ENCODE measurements at regions of chr4 and their contacts with region 1.

Region 1: GRCh38 chr4:83012687-83013419 is 2.2 kb upstream of the LIN54 start:
- DNase-seq: peak; percentile 97 to 98
- H3K4me3 ChIP-seq: peak overlapping the region; percentile 51
- H3K4me3 Mint-ChIP-seq: peak overlapping the region; percentile 95
- H3K27ac Mint-ChIP-seq: peak overlapping the region; percentile 99
- H3K4me1 ChIP-seq: peaks cover 15% of the 10 kb centered on the region; the same call in 1 of the 2 replicates
- H3K4me1 Mint-ChIP-seq: peaks cover 21% of the 10 kb centered on the region
- H3K27me3 ChIP-seq: no peaks in the 10 kb centered on the region
- H3K27me3 Mint-ChIP-seq: no peaks in the 10 kb centered on the region
- CTCF ChIP-seq: peak; percentile 49 to 60

Region 2: GRCh38 chr4:82677321-82677720 is 335.5 kb before region 1 on chr4:
- CTCF ChIA-PET with region 1: no interaction called
- POLR2A ChIA-PET with region 1: no interaction called
- intact Hi-C with region 1: no loop called
- DNase-seq: peak in 1 of 2 experiments; percentile 50
- H3K4me3 ChIP-seq: no peak overlapping the region
- H3K4me3 Mint-ChIP-seq: no peak overlapping the region
- H3K27ac Mint-ChIP-seq: no peak overlapping the region
- H3K4me1 ChIP-seq: peaks cover 12% of the 10 kb centered on the region
- H3K4me1 Mint-ChIP-seq: peaks cover 13% of the 10 kb centered on the region
- H3K27me3 ChIP-seq: no peaks in the 10 kb centered on the region
- H3K27me3 Mint-ChIP-seq: no peaks in the 10 kb centered on the region
- CTCF ChIP-seq: no peak

Region 3: GRCh38 chr4:82785611-82786400 is 227.0 kb before region 1 on chr4:
- CTCF ChIA-PET with region 1: no interaction called
- POLR2A ChIA-PET with region 1: no interaction called
- intact Hi-C with region 1: no loop called
- DNase-seq: no peak
- H3K4me3 ChIP-seq: no peak overlapping the region
- H3K4me3 Mint-ChIP-seq: no peak overlapping the region
- H3K27ac Mint-ChIP-seq: no peak overlapping the region
- H3K4me1 ChIP-seq: peaks cover 19% of the 10 kb centered on the region
- H3K4me1 Mint-ChIP-seq: peaks cover 20% of the 10 kb centered on the region
- H3K27me3 ChIP-seq: no peaks in the 10 kb centered on the region
- H3K27me3 Mint-ChIP-seq: no peaks in the 10 kb centered on the region
- CTCF ChIP-seq: no peak

Region 4: GRCh38 chr4:82890901-82891706 is 121.7 kb before region 1 on chr4 and contains the start of gene SEC31A:
- CTCF ChIA-PET with region 1: no interaction called
- POLR2A ChIA-PET with region 1: interaction called, 11 read pairs
- intact Hi-C with region 1: no loop called
- DNase-seq: peak; percentile 96
- H3K4me3 ChIP-seq: peak within 1 kb of the TSS; percentile 73
- H3K4me3 Mint-ChIP-seq: peak within 1 kb of the TSS; percentile 94
- H3K27ac Mint-ChIP-seq: peak within 1 kb of the TSS; percentile 95
- H3K4me1 ChIP-seq: peaks cover 45% of the 10 kb centered on the region
- H3K4me1 Mint-ChIP-seq: peaks cover 28% of the 10 kb centered on the region
- H3K27me3 ChIP-seq: no peaks in the 10 kb centered on the region
- H3K27me3 Mint-ChIP-seq: no peaks in the 10 kb centered on the region
- CTCF ChIP-seq: no peak
- total RNA-seq, gene SEC31A: 175 and 187 TPM in 2 replicates

Region 5: GRCh38 chr4:82900331-82901128 is 112.3 kb before region 1 on chr4 and contains the start of gene THAP9:
- CTCF ChIA-PET with region 1: no interaction called
- POLR2A ChIA-PET with region 1: interaction called, 18 read pairs
- intact Hi-C with region 1: loop called (anchors 2 kb)
- DNase-seq: peak; percentile 97 to 99
- H3K4me3 ChIP-seq: peak within 1 kb of the TSS; percentile 69
- H3K4me3 Mint-ChIP-seq: no peak within 1 kb of the TSS
- H3K27ac Mint-ChIP-seq: no peak within 1 kb of the TSS
- H3K4me1 ChIP-seq: peaks cover 12% of the 10 kb centered on the region; the same call in 1 of the 2 replicates
- H3K4me1 Mint-ChIP-seq: no peaks in the 10 kb centered on the region
- H3K27me3 ChIP-seq: no peaks in the 10 kb centered on the region
- H3K27me3 Mint-ChIP-seq: no peaks in the 10 kb centered on the region
- CTCF ChIP-seq: no peak
- total RNA-seq, gene THAP9: 6.8 and 7.9 TPM in 2 replicates

Region 6: DNA sequence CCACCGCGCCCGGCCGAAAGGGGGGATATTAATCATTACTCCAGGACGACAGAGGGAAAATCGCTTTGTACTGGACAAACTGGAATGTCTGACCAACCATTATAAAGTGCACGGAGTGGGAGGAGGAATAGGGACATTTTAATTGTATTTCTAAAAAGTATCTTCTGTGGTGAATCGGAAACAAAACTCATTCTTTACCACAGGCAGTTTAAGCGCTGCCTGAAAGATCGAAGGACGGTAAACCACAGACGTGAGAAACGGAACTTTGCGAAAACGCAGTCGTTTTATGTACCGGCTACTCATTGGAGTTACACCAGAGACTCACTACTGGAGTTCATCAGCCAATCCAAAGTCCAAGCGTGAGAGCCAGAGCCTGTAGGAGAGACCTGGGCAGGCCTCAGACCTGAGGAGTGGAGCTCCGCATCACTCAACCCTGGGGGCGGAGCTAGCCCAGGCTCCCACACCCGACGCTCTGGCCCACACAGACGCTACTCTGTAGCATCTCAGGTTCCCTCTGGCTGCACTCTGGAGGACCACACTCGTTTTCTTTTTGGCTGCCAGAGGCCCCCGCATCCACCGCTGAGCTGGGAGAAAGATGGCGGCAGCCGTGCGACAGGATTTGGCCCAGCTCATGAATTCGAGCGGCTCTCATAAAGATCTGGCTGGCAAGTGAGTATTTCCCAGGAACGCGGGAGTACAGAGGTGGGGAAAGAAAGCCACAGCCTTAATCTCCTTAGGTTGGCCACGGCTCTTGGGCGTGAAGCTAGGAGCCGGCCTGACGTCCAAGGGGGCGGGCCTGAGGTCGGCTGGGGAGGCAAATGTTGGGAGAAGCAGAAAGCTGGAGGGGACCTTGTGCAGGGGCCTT is 22.0 kb after region 1 on chr4 and contains the start of gene COPS4:
- CTCF ChIA-PET with region 1: interaction called, 22 read pairs
- POLR2A ChIA-PET with region 1: interaction called, 24 read pairs
- intact Hi-C with region 1: loop called (anchors 1 kb)
- DNase-seq: peak; percentile 97 to 98
- H3K4me3 ChIP-seq: peak within 1 kb of the TSS; percentile 80
- H3K4me3 Mint-ChIP-seq: peak within 1 kb of the TSS; percentile 98
- H3K27ac Mint-ChIP-seq: peak within 1 kb of the TSS; percentile 97
- H3K4me1 ChIP-seq: peaks cover 4% of the 10 kb centered on the region; the same call in 1 of the 2 replicates
- H3K4me1 Mint-ChIP-seq: no peaks in the 10 kb centered on the region
- H3K27me3 ChIP-seq: no peaks in the 10 kb centered on the region; the same call in 1 of the 2 replicates
- H3K27me3 Mint-ChIP-seq: no peaks in the 10 kb centered on the region
- CTCF ChIP-seq: peak; percentile 24 to 43
- total RNA-seq, gene COPS4: 34.5 and 36.3 TPM in 2 replicates

Region 7: GRCh38 chr4:83097018-83097417 is 84.2 kb after region 1 on chr4:
- CTCF ChIA-PET with region 1: no interaction called
- POLR2A ChIA-PET with region 1: no interaction called
- intact Hi-C with region 1: no loop called
- DNase-seq: no peak
- H3K4me3 ChIP-seq: no peak overlapping the region
- H3K4me3 Mint-ChIP-seq: no peak overlapping the region
- H3K27ac Mint-ChIP-seq: no peak overlapping the region
- H3K4me1 ChIP-seq: no peaks in the 10 kb centered on the region
- H3K4me1 Mint-ChIP-seq: no peaks in the 10 kb centered on the region
- H3K27me3 ChIP-seq: no peaks in the 10 kb centered on the region
- H3K27me3 Mint-ChIP-seq: no peaks in the 10 kb centered on the region
- CTCF ChIP-seq: no peak

Region 8: DNA sequence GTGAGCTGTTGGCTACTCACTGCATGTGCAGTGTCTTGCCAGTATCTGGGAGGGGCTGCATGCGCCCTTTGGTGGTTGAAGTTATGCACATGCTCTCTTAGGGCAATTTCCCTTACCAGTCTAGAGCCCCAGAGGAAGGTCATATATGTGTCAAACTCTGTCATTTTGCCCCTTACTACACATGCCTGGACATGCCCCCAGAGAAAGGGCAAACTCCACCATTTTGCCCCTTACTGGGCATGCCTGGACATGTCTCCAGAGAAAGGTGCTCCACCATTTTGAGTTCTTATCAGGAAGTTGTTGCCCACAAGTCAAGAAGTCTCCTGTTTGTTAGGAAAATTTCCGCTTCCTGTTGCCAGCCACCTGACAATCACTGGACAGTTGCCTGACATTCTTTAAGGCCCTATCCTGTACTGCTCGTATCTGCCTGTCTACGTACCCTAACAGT is 158.1 kb after region 1 on chr4:
- CTCF ChIA-PET with region 1: no interaction called
- POLR2A ChIA-PET with region 1: no interaction called
- intact Hi-C with region 1: no loop called
- DNase-seq: peak in 1 of 2 experiments; percentile 38
- H3K4me3 ChIP-seq: no peak overlapping the region
- H3K4me3 Mint-ChIP-seq: no peak overlapping the region
- H3K27ac Mint-ChIP-seq: no peak overlapping the region
- H3K4me1 ChIP-seq: no peaks in the 10 kb centered on the region
- H3K4me1 Mint-ChIP-seq: no peaks in the 10 kb centered on the region
- H3K27me3 ChIP-seq: no peaks in the 10 kb centered on the region
- H3K27me3 Mint-ChIP-seq: peaks cover 4% of the 10 kb centered on the region
- CTCF ChIP-seq: no peak

Region 9: DNA sequence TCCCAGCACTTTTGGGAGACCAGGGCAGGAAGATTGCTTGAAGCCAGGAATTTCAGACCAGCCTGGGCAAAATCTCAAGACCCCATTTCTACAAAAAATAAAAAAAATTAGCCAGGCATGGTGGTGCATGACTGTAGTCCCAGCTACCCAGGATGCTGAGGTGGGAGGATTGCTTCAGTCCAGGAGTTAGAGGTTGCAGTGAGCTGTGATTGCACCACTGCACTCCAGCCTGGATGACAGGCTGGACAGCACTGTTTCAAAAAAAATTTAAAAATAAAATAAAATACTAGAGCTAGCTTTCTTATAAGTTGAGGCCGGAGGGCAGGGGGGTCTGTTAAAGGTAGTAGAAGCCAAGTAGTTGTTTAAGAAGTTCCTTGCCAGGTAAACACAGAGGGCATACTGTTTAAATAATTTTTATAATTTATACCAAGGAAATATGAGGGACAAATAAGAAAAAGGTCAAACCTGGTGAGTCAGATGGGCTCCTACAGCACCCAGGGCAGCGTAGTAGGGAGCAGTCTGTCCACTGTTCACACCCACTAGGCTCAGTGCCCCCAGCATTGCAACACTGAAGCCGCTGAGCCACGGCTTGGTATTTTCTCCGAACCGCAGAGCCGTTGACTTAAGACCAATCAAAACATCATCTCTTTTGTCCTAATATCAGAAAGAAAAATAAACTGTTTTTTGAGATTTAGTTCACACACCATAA is 254.4 kb after region 1 on chr4:
- CTCF ChIA-PET with region 1: no interaction called
- POLR2A ChIA-PET with region 1: no interaction called
- intact Hi-C with region 1: loop called (anchors 2 kb)
- DNase-seq: no peak
- H3K4me3 ChIP-seq: no peak overlapping the region
- H3K4me3 Mint-ChIP-seq: no peak overlapping the region
- H3K27ac Mint-ChIP-seq: no peak overlapping the region
- H3K4me1 ChIP-seq: no peaks in the 10 kb centered on the region
- H3K4me1 Mint-ChIP-seq: no peaks in the 10 kb centered on the region
- H3K27me3 ChIP-seq: no peaks in the 10 kb centered on the region
- H3K27me3 Mint-ChIP-seq: no peaks in the 10 kb centered on the region
- CTCF ChIP-seq: no peak

Region 10: DNA sequence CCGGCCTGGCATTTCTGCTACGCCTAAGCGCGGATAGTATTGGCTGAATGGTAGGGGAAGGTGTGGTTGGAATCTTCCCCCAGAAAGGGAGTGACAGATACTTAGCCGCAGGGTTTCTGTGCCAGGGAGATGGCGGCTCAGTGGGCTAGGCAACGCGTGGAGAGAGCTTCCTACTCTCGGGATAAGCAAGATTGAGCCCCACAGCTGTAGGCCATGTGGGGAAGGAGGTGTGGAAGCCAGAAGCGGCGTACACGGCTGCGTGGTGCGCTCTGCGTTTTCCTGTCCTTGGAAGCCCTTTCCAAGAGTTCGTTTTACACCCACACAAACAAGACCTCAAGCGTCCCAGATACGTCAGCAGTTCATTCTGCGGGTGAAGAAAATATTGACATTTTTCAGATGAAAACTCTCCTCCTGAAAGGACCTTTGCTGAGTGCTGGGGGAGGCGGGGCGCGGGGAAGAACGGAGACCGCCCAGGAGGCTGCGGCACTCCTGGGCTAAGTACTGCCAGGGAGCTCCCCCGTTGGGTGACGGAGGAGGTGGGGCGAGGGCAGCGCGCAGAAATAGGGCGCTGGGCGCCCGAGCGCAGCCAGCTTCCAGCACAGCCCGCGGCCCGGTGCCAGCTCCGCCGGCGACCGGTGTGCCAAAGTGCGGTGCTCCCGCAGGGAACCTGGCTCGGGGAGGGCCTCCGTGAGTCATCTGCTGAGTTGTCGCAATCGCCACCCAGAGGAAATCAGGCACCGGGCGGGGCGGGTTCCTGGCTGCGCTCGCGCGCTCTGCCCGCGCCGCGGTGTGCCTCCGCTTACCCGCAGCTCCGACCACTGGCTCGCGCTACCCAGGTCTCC is 522.9 kb after region 1 on chr4 and contains the start of gene GPAT3:
- CTCF ChIA-PET with region 1: no interaction called
- POLR2A ChIA-PET with region 1: interaction called, 17 read pairs
- intact Hi-C with region 1: no loop called
- DNase-seq: peak; percentile 68 to 75
- H3K4me3 ChIP-seq: peak within 1 kb of the TSS; percentile 76
- H3K4me3 Mint-ChIP-seq: peak within 1 kb of the TSS; percentile 93
- H3K27ac Mint-ChIP-seq: peak within 1 kb of the TSS; percentile 70
- H3K4me1 ChIP-seq: no peaks in the 10 kb centered on the region
- H3K4me1 Mint-ChIP-seq: no peaks in the 10 kb centered on the region
- H3K27me3 ChIP-seq: no peaks in the 10 kb centered on the region
- H3K27me3 Mint-ChIP-seq: peaks cover 9% of the 10 kb centered on the region
- CTCF ChIP-seq: no peak
- total RNA-seq, gene GPAT3: 4.6 and 5.0 TPM in 2 replicates

Region 11: GRCh38 chr4:84638092-84638491 is 1625.2 kb after region 1 on chr4:
- CTCF ChIA-PET with region 1: no interaction called
- POLR2A ChIA-PET with region 1: interaction called, 19 read pairs
- intact Hi-C with region 1: no loop called
- DNase-seq: no peak
- H3K4me3 ChIP-seq: no peak overlapping the region
- H3K4me3 Mint-ChIP-seq: no peak overlapping the region
- H3K27ac Mint-ChIP-seq: no peak overlapping the region
- H3K4me1 ChIP-seq: no peaks in the 10 kb centered on the region
- H3K4me1 Mint-ChIP-seq: no peaks in the 10 kb centered on the region
- H3K27me3 ChIP-seq: no peaks in the 10 kb centered on the region
- H3K27me3 Mint-ChIP-seq: no peaks in the 10 kb centered on the region
- CTCF ChIP-seq: no peak